HAP-1 (cell line): ENCODE measurements at regions of chr6 and their contacts with region 1.

Region 1: GRCh38 chr6:83057705-83058321 is 7.8 kb downstream of the UBE3D start:
- DNase-seq: peak in 1 of 2 experiments; percentile 63
- H3K4me3 ChIP-seq: no peak overlapping the region
- H3K4me1 ChIP-seq: no peaks in the 10 kb centered on the region
- H3K27me3 ChIP-seq: no peaks in the 10 kb centered on the region

Region 2: GRCh38 chr6:82247634-82248232 is 810.1 kb before region 1 on chr6 and contains the start of gene IBTK:
- in situ Hi-C with region 1: loop called (anchors 10 kb)
- DNase-seq: peak; percentile 86 to 93
- H3K4me3 ChIP-seq: peak within 1 kb of the TSS; percentile 68
- H3K4me1 ChIP-seq: peaks cover 29% of the 10 kb centered on the region
- H3K27me3 ChIP-seq: no peaks in the 10 kb centered on the region

Region 3: DNA sequence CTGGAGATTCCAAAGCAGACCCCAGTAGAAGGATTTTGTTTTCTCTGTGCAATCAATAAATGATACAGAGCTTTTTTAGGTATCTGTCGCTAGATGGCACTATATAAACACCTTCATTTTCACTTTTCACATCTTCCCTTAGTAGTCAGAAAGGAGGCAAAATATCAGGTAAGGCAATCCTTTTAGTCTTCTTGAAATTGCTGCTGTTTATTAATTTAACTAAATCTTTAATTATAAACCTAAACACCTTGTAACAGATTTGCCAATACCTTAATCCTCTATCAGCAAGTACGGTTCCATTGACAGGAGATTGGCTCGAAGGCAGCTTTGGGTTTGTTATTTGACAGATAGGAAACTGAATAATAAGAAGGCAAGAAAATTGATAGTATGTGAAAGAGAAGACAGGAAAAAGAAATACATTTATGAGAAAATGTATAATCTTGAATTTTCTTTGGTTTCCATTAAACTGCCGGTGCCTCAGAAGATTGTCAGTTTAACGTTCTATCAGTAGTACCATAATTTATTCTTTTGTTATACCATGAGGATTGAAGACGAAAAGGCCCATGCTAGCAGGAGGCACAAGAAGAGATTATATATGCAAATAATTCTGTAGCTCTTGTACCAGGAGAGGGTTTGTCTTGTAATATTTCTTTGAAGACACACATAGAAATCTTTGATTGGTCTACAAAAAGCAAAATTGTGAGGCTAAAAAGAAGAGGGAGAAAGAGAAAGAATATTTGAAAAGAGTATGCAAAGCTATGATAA is 786.8 kb before region 1 on chr6:
- in situ Hi-C with region 1: loop called (anchors 10 kb)
- DNase-seq: peak in 1 of 2 experiments; percentile 72
- H3K4me3 ChIP-seq: no peak overlapping the region
- H3K4me1 ChIP-seq: no peaks in the 10 kb centered on the region
- H3K27me3 ChIP-seq: no peaks in the 10 kb centered on the region

Region 4: GRCh38 chr6:83389606-83390005 is 331.8 kb after region 1 on chr6:
- in situ Hi-C with region 1: no loop called
- DNase-seq: no peak
- H3K4me3 ChIP-seq: no peak overlapping the region
- H3K4me1 ChIP-seq: peaks cover 5% of the 10 kb centered on the region; the same call in 1 of the 2 replicates
- H3K27me3 ChIP-seq: no peaks in the 10 kb centered on the region